Left ventricle myocardium inferior (tissue), 1 donor: ENCODE measurements at regions of chr17 and their contacts with region 1.

Region 1: GRCh38 chr17:40443583-40444327 is 505 bp downstream of the IGFBP4 start:
- DNase-seq: peak; percentile 84
- H3K4me3 ChIP-seq: peak overlapping the region; percentile 90
- H3K27ac ChIP-seq: peak overlapping the region; percentile 97
- H3K4me1 ChIP-seq: peaks cover 58% of the 10 kb centered on the region
- H3K27me3 ChIP-seq: no peaks in the 10 kb centered on the region
- CTCF ChIP-seq: peak; percentile 44

Region 2: DNA sequence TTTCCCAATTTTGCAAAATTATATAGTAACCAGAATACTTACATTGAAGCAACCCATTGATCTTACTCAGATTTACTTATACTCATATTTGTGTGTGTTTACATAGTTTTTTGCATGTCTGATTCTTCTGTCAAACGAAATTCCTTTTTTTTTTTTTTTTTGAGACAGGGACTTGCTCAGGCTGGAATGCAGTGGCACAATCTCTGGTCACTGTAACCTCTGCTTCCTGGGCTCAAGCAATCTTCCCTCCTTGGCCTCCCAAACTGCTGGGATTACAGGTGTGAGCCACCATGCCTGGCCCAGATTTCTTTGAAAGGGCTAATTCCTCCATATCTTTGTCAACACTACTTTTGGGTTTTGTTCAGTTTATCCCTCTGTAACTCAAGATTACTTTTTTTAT is 56.1 kb before region 1 on chr17:
- intact Hi-C with region 1: no loop called
- DNase-seq: no peak
- H3K4me3 ChIP-seq: no peak overlapping the region
- H3K27ac ChIP-seq: no peak overlapping the region
- H3K4me1 ChIP-seq: no peaks in the 10 kb centered on the region
- H3K27me3 ChIP-seq: peaks cover 1% of the 10 kb centered on the region
- CTCF ChIP-seq: no peak

Region 3: DNA sequence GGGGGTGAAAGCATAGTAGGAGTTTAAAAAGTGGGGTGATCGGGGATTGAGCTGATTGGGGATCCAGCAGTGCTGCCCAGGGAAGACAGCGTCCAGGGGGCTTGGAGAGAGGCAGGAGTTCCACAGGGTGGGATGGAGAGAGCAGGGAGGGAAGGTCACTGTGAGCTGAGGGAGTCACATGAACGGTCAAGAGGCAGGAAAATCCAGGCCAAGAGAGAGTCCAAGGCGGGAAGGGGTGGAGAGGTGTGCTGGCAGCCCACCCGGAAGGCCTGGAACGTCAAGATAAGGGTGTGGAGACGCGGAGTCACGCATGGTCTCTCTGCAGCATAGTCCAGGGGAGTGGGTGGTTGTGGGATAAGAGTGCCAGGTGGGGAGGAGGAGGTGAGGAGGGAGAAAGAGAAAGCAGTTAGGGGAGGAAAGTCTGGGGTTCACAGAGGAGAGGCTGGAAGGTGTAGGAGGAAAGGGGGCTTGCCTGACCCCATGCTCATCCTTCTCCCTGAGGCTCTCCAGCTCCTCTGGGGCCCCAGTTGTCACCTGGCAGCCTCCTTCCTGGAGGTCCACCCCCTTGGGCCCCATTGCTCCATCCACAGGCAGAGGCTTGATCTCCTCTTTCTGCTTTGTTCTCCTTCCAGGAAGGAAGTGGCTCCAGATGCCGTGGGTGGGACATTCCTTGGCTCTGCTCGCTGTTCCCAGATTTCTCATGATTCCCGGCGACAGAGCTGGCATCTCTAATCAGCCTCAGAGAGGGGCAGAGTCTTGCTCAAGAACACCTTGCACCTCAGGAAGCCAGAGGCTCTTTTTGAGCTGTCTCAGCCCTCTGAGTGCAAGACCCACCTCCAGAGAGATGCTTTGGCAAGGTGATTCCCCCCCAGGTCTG is 92.8 kb after region 1 on chr17:
- intact Hi-C with region 1: loop called (anchors 10 kb)
- DNase-seq: no peak
- H3K4me3 ChIP-seq: no peak overlapping the region
- H3K27ac ChIP-seq: peak overlapping the region; percentile 94
- H3K4me1 ChIP-seq: peaks cover 96% of the 10 kb centered on the region
- H3K27me3 ChIP-seq: no peaks in the 10 kb centered on the region
- CTCF ChIP-seq: no peak

Region 4: DNA sequence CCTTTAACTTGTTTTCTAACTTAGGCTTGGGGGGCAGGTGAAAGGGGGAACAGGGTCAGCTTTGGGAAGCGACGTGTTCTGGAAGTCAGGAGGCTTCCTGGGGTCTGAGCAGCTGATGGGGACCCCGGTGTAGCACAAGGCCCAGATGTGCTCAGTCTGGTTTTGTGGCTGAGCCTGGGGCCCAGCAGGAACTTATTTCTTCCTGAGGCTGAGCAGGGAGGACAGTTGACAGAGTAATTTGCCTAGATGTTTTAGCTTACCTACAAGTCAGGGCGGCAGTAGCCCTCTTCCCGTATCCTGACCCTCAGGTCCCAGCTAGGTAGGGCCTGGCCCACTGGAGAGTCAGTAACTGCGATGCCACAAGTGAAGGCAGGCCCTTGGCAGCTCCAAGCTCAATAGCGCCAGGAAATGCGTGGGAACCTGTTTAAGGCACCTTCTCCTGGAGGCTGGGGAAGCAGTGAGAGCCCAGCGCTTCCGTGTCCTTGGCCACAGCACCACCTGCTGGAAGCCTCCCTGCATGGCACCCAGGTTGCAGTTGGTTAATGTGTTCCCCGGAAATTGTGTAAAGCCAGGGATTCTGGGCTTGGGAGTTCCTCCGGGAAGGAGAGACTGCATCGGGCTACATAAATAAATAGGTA is 116.3 kb after region 1 on chr17:
- intact Hi-C with region 1: loop called (anchors 5 kb)
- DNase-seq: peak; percentile 88
- H3K4me3 ChIP-seq: peak overlapping the region; percentile 36
- H3K27ac ChIP-seq: peak overlapping the region; percentile 92
- H3K4me1 ChIP-seq: peaks cover 61% of the 10 kb centered on the region
- H3K27me3 ChIP-seq: peaks cover 39% of the 10 kb centered on the region
- CTCF ChIP-seq: peak; percentile 99